ENCODE measurements at regions of chr3 and their contacts with region 1.

Region 1: GRCh38 chr3:12287727-12288191 is 1.1 kb upstream of the PPARG start:
- DNase-seq: peak; percentile 51 to 77
- H3K4me3 ChIP-seq: peak overlapping the region; percentile 92
- H3K4me3 Mint-ChIP-seq: peak overlapping the region; percentile 75
- H3K27ac Mint-ChIP-seq: no peak overlapping the region
- H3K4me1 ChIP-seq: peaks cover 7% of the 10 kb centered on the region
- H3K4me1 Mint-ChIP-seq: no peaks in the 10 kb centered on the region
- H3K27me3 ChIP-seq: no peaks in the 10 kb centered on the region
- H3K27me3 Mint-ChIP-seq: no peaks in the 10 kb centered on the region
- CTCF ChIP-seq: no peak

Region 2: DNA sequence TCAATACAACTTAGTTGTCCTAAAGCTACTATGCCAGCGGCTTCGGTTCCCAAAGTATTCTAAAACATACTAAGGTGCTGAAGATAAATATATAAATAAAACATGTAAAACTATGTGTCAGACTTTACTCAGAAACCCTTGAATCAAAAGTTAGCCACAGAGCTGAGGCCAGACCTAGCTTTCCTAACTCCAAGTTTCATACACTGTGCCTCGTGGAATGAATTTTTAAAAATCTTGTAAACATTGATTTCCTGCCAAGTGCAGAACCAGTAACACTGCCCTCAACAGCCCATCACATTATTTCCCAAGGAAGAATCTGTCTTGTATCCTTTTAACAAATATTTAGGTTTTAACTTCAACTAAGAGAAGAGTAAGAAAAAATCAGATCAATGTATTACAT is 477.5 kb before region 1 on chr3:
- CTCF ChIA-PET with region 1: no interaction called
- POLR2A ChIA-PET with region 1: no interaction called
- intact Hi-C with region 1: no loop called
- DNase-seq: no peak
- H3K4me3 ChIP-seq: no peak overlapping the region
- H3K4me3 Mint-ChIP-seq: no peak overlapping the region
- H3K27ac Mint-ChIP-seq: no peak overlapping the region
- H3K4me1 ChIP-seq: no peaks in the 10 kb centered on the region
- H3K4me1 Mint-ChIP-seq: no peaks in the 10 kb centered on the region
- H3K27me3 ChIP-seq: no peaks in the 10 kb centered on the region
- H3K27me3 Mint-ChIP-seq: no peaks in the 10 kb centered on the region
- CTCF ChIP-seq: no peak

Region 3: DNA sequence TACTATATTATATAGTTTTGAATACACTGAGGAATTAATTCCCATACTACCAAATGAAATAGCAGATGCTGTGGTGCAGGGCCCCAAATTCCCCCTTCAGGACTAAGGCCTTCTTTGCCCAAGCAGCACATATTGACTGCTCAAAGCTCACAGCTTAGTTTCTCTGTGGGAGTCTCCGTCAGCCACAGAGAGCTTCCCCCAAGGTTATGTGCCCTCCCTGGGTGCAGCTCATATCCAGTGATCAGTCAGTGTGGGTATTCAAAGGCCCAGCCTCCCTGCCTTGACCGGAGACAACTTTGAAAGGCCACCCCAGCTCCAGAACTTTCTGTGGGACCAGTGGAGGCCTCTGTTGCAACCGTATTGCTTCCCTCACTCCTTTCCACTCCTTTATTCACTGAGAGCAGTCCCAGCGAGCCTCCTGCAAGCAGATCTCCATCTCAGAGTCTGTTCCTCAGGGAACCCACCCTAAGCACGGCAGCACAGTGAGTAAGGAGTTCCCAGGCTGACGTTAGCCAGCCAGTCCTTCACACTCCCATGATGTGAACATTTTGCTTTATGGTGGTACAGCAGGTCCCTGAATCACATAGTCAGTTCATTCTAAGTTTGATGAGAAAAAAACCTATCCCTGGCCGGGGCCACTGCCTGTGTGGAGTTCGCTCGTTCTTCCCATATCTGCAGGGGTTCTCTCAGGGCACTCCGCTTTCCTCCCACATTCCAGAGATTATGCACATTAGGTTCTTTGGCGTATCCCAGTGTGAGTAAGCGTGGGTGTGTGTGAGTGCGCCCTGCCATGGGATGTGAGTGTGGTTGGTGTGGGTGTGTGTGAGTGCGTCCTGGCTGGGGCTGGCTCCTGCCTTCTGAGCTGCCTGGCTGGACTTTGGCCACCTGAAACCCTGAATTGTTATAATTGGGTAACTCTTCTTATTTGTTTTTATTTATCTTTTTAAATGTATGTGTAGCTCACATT is 63.3 kb before region 1 on chr3:
- CTCF ChIA-PET with region 1: no interaction called
- POLR2A ChIA-PET with region 1: no interaction called
- intact Hi-C with region 1: loop called (anchors 1 kb)
- DNase-seq: peak; percentile 17 to 58
- H3K4me3 ChIP-seq: no peak overlapping the region
- H3K4me3 Mint-ChIP-seq: no peak overlapping the region
- H3K27ac Mint-ChIP-seq: no peak overlapping the region
- H3K4me1 ChIP-seq: peaks cover 58% of the 10 kb centered on the region
- H3K4me1 Mint-ChIP-seq: peaks cover 47% of the 10 kb centered on the region
- H3K27me3 ChIP-seq: no peaks in the 10 kb centered on the region
- H3K27me3 Mint-ChIP-seq: no peaks in the 10 kb centered on the region
- CTCF ChIP-seq: no peak

Region 4: GRCh38 chr3:12253561-12254343 is 34.0 kb before region 1 on chr3:
- CTCF ChIA-PET with region 1: no interaction called
- POLR2A ChIA-PET with region 1: no interaction called
- intact Hi-C with region 1: loop called (anchors 2 kb)
- DNase-seq: peak; percentile 66 to 80
- H3K4me3 ChIP-seq: no peak overlapping the region
- H3K4me3 Mint-ChIP-seq: peak overlapping the region; percentile 15
- H3K27ac Mint-ChIP-seq: peak overlapping the region; percentile 35
- H3K4me1 ChIP-seq: peaks cover 28% of the 10 kb centered on the region
- H3K4me1 Mint-ChIP-seq: peaks cover 37% of the 10 kb centered on the region
- H3K27me3 ChIP-seq: no peaks in the 10 kb centered on the region
- H3K27me3 Mint-ChIP-seq: no peaks in the 10 kb centered on the region
- CTCF ChIP-seq: no peak

Region 5: DNA sequence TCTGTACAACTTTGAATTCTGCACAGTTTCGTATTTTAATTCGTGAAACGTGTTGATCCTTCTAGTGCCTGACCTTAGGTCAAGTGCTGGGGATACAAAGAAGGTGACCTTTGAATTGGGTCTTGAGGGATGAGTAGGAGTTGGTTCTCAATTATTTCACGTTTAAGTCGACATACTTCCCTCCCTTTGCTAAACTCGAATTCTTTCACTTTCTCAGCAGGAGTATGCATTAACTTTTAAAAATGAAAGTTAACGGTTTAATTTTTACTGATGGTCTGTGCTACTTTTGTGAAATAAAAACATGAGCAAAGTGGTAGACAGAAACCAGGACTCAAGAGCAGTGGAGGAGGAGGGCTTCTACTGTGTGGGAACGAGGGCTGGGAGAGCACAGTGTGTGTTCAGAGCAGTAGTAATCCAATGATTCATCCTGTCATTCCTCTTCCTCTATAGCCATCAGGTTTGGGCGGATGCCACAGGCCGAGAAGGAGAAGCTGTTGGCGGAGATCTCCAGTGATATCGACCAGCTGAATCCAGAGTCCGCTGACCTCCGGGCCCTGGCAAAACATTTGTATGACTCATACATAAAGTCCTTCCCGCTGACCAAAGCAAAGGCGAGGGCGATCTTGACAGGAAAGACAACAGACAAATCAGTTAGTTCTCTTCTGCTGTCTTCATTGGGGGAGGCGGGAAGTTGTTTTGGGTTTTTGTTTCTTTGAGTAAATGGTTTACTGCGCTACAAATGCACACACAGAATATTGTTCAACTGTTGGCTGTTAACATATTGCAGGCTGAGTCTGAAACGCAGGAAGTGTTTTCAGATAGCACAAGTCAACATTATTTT is 117.9 kb after region 1 on chr3:
- CTCF ChIA-PET with region 1: no interaction called
- POLR2A ChIA-PET with region 1: no interaction called
- intact Hi-C with region 1: loop called (anchors 10 kb)
- DNase-seq: peak; percentile 84 to 94
- H3K4me3 ChIP-seq: no peak overlapping the region
- H3K4me3 Mint-ChIP-seq: peak overlapping the region; percentile 68
- H3K27ac Mint-ChIP-seq: peak overlapping the region; percentile 46
- H3K4me1 ChIP-seq: peaks cover 57% of the 10 kb centered on the region
- H3K4me1 Mint-ChIP-seq: peaks cover 25% of the 10 kb centered on the region
- H3K27me3 ChIP-seq: no peaks in the 10 kb centered on the region
- H3K27me3 Mint-ChIP-seq: no peaks in the 10 kb centered on the region
- CTCF ChIP-seq: no peak

Region 6: DNA sequence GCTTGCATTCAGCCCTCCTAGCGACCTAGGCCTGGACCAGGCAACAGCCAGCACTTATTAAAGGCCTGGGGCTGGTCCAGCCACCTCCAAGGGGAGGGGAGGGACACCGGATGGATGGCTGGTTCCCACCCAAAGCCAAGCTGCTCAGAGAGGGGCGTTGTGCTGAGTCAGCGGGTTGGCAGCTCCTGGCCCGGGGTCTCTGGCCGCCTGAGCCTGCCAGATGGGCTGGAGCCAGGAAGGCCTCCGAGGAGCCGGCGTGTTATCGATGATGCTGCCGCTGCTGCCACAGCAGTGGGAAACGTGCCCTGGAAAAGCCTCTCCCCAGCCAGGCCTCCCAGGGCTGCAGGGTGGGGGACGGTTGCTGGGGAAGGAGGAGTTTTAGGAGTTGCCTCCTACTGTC is 153.2 kb after region 1 on chr3:
- CTCF ChIA-PET with region 1: no interaction called
- POLR2A ChIA-PET with region 1: no interaction called
- intact Hi-C with region 1: loop called (anchors 10 kb)
- DNase-seq: no peak
- H3K4me3 ChIP-seq: no peak overlapping the region
- H3K4me3 Mint-ChIP-seq: no peak overlapping the region
- H3K27ac Mint-ChIP-seq: peak overlapping the region; percentile 50
- H3K4me1 ChIP-seq: peaks cover 30% of the 10 kb centered on the region
- H3K4me1 Mint-ChIP-seq: peaks cover 29% of the 10 kb centered on the region
- H3K27me3 ChIP-seq: no peaks in the 10 kb centered on the region
- H3K27me3 Mint-ChIP-seq: no peaks in the 10 kb centered on the region
- CTCF ChIP-seq: no peak